ENCODE measurements at regions of chr10 and their contacts with region 1.

Region 1: DNA sequence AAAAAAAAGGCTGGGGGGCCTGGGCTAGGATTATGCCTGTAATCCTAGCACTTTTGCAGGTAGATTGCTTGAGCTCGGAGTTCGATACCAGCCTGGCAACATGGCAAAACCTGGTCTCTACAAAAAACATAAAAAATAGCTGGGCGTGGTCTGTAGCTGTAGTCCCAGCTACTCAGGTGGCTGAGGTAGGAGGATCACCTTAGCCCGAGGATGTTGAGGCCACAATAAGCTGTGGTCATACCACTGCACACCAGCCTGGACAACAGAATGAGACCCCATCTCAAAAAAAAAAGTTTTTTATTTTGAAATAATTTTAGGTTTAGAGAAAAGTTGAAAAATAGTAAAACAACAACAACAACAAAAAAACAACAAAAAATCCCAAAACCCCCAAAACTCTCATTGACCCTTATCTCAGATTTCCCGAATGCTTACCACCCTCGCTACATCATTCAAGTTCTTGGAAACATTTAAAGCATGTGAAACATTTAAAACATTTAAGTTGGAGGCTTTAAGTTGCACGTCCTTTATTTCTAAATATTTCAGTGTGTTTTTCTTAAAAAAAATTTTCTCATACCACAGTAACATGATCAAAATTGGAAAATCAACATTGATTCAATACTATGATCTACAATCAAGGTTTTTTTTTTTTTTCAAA is 520 bp upstream of the ARMS2 start:
- DNase-seq: no peak
- H3K4me3 ChIP-seq: no peak overlapping the region
- H3K27ac ChIP-seq: no peak overlapping the region
- H3K4me1 ChIP-seq: no peaks in the 10 kb centered on the region
- H3K27me3 ChIP-seq: no peaks in the 10 kb centered on the region
- CTCF ChIP-seq: no peak
- POLR2A ChIP-seq: no peak

Region 2: DNA sequence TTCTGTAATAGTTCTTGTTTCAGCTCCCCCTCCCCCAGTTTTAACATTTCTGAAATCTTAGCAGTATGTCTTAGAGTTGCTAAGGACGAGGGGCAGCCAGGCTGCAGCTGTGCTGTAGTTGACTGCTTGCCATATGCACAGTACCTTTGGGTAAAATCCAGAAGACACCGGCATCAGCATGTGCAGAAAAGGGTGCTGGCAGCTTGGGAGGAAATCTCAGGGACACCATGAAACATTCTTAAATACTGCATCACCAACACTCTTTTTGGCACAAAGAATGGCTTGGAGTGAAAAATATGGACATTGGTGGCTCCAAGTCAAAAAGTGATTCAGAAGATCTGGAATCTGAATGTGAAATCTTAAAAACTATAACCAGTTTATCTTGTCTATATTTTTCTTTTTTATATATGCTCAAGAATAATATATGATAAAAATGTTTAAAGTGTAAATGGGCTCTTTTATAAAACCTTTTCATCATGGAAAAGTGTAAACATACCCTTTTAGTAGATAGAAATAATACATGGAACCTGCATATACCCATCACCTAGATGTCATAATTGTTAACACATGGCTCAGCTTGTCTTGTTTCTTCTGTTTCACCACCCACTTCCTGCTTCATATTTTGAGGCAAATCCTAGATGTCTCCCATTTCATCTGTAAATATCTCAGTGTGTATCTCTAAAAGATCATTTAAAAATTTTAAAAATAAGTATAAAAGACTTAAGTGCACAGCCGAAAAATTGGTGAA is 33.9 kb before region 1 on chr10:
- intact Hi-C with region 1: loop called (anchors 2 kb)
- DNase-seq: no peak
- H3K4me3 ChIP-seq: no peak overlapping the region
- H3K27ac ChIP-seq: no peak overlapping the region
- H3K4me1 ChIP-seq: no peaks in the 10 kb centered on the region
- H3K27me3 ChIP-seq: no peaks in the 10 kb centered on the region
- CTCF ChIP-seq: no peak
- POLR2A ChIP-seq: no peak

Region 3: DNA sequence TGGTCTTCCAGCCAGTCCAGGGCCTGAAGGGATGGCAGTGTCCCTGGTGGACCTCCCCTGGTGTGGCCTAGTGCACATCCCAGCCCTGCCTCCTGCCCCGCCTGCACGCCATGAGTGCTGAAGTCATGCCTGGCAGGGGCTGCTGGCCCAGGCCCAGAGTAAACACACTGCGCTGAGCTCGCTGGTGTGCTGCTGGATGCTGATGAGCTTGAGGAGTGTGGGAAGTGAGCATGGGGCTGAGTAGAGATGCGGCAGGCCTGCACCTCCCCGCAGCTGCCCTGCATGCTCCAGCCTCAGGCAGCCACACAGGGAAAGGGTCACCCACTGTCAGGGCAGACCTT is 50.6 kb after region 1 on chr10:
- intact Hi-C with region 1: no loop called
- DNase-seq: peak; percentile 87 to 89
- H3K4me3 ChIP-seq: no peak overlapping the region
- H3K27ac ChIP-seq: peak overlapping the region; percentile 68 to 75
- H3K4me1 ChIP-seq: peaks cover 0 to 8% of the 10 kb centered on the region in 2 donors
- H3K27me3 ChIP-seq: no peaks in the 10 kb centered on the region
- CTCF ChIP-seq: no peak
- POLR2A ChIP-seq: no peak

Measured in breast epithelium (tissue), 4 donors.